PC-3 (cell line): ENCODE measurements at regions of chr6 and their contacts with region 1.

Region 1: DNA sequence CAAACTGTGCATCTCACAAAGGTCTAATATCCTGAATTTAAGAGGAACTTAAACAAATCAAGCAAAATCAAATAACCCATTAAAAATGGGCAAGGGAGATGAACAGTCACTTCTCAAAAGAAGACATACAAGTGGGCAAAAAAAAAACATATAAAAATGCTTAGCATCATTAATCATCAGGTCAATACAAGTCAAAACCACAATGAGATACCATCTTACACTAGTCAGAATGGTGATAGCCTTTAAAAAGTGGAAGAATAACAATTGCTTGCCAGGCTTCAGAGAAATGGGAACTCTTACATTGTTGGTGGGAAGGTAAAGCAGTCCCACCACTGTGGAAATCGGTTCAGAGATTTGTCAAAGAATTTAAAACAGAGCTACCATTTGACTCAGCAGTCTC is 646.7 kb upstream of the PTCHD4 start:
- DNase-seq: peak; percentile 93
- ATAC-seq: peak; percentile 94
- H3K4me3 ChIP-seq: peak overlapping the region; percentile 10; the same call in 1 of the 2 replicates
- H3K27ac ChIP-seq: peak overlapping the region; percentile 85
- H3K4me1 ChIP-seq: peaks cover 20% of the 10 kb centered on the region
- H3K27me3 ChIP-seq: no peaks in the 10 kb centered on the region
- CTCF ChIP-seq: no peak

Region 2: GRCh38 chr6:48080227-48081009 is 677.2 kb before region 1 on chr6:
- CTCF ChIA-PET with region 1: no interaction called
- POLR2A ChIA-PET with region 1: no interaction called
- intact Hi-C with region 1: loop called (anchors 1 kb)
- DNase-seq: peak; percentile 93
- ATAC-seq: peak; percentile 78
- H3K4me3 ChIP-seq: no peak overlapping the region
- H3K27ac ChIP-seq: peak overlapping the region; percentile 52
- H3K4me1 ChIP-seq: peaks cover 41% of the 10 kb centered on the region
- H3K27me3 ChIP-seq: no peaks in the 10 kb centered on the region
- CTCF ChIP-seq: no peak

Region 3: GRCh38 chr6:48541647-48542046 is 216.0 kb before region 1 on chr6:
- CTCF ChIA-PET with region 1: no interaction called
- POLR2A ChIA-PET with region 1: no interaction called
- intact Hi-C with region 1: loop called (anchors 1 kb)
- DNase-seq: peak; percentile 84
- ATAC-seq: peak; percentile 98
- H3K4me3 ChIP-seq: no peak overlapping the region
- H3K27ac ChIP-seq: peak overlapping the region; percentile 55
- H3K4me1 ChIP-seq: peaks cover 16% of the 10 kb centered on the region
- H3K27me3 ChIP-seq: no peaks in the 10 kb centered on the region
- CTCF ChIP-seq: no peak

Region 4: DNA sequence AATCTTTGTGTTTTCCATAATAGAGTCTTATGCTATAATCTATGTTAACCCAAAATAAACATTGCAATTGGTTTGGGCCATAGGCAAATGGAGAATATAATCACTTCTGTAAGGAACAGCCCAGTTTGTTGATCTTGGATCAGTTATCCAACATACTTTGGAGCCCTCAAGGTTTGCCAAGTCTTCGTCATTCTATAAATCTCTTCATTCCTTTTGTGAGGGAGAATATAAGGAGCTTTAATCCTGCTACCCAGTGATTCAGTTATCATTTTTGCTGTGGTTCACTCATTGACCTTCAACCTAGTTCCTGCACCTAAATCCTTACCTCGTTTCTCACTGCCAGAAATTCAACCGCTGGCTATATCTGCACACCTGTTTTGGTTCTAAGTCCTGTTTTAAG is 146.3 kb before region 1 on chr6:
- CTCF ChIA-PET with region 1: interaction called, 3 read pairs
- POLR2A ChIA-PET with region 1: no interaction called
- intact Hi-C with region 1: loop called (anchors 10 kb)
- DNase-seq: peak; percentile 92
- ATAC-seq: peak; percentile 92
- H3K4me3 ChIP-seq: no peak overlapping the region
- H3K27ac ChIP-seq: peak overlapping the region; percentile 56
- H3K4me1 ChIP-seq: peaks cover 15% of the 10 kb centered on the region
- H3K27me3 ChIP-seq: no peaks in the 10 kb centered on the region
- CTCF ChIP-seq: no peak

Region 5: DNA sequence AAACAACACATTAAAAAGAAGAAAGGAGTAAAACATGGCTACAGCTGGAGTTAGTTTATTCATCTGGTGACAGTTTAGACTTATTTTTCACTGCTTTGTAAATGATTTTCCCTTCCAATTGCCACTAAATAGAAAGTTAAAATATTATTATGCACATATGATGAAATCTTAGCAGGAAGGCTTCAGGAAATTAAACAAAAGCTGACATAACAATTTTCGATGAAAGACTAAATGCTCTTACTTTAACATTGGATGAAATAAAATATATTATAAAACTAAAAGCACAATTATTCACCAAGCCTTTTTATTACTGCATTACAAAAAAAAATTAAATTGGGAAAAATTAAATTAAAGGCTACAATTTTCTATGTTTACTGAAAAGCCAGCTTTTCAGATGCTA is 547.3 kb after region 1 on chr6:
- CTCF ChIA-PET with region 1: no interaction called
- POLR2A ChIA-PET with region 1: no interaction called
- intact Hi-C with region 1: no loop called
- DNase-seq: no peak
- ATAC-seq: no peak
- H3K4me3 ChIP-seq: no peak overlapping the region
- H3K27ac ChIP-seq: no peak overlapping the region
- H3K4me1 ChIP-seq: peaks cover 14% of the 10 kb centered on the region
- H3K27me3 ChIP-seq: no peaks in the 10 kb centered on the region
- CTCF ChIP-seq: no peak